GM12878 (cell line): ENCODE measurements at regions of chr15 and their contacts with region 1.

Region 1: DNA sequence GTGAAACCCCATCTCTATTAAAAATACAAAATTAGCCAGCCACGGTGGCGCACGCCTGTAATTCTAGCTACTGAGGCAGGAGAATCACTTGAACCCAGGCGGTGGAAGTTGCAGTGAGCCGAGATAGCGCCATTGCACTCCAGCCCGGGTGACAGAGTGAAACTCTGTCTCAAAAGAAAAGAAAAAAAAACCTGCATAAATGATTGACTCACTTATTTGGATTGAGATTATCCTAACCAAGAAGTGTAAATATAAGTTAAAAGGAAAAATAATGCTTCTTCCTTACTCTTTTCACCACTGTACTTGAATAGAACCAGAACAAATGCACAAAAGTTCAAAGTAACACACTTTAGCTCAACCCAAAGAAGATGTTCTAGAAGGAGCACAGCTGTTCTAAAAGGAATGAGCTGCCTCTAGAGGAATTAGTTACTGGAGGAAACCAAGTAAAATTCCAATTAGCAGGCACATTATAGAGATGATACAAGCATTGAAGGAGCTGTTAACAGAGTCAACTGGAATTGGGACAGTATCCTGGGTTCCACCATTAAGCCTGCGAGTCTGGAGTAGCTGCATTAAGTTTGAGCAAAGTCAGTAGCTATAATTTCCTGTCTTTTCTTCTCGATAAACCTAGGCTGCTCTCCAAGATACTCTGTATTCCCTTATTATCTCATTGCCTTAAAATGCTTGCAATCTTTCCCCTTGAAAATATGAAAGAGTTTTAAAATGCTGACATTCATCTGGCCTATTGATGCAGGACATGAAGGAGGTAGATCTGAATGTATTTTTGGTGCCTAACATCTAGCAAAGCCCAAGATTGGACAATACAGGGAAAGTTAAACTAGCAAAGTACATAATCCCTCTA is 9.5 kb downstream of the MTHFS start:
- DNase-seq: no peak
- ATAC-seq: no peak
- H3K4me3 ChIP-seq: no peak overlapping the region
- H3K27ac ChIP-seq: no peak overlapping the region
- H3K4me1 ChIP-seq: peaks cover 5% of the 10 kb centered on the region
- H3K27me3 ChIP-seq: no peaks in the 10 kb centered on the region
- CTCF ChIP-seq: no peak
- EP300 ChIP-seq: no peak
- POLR2A ChIP-seq: no peak
- RAD21 ChIP-seq: no peak

Region 2: DNA sequence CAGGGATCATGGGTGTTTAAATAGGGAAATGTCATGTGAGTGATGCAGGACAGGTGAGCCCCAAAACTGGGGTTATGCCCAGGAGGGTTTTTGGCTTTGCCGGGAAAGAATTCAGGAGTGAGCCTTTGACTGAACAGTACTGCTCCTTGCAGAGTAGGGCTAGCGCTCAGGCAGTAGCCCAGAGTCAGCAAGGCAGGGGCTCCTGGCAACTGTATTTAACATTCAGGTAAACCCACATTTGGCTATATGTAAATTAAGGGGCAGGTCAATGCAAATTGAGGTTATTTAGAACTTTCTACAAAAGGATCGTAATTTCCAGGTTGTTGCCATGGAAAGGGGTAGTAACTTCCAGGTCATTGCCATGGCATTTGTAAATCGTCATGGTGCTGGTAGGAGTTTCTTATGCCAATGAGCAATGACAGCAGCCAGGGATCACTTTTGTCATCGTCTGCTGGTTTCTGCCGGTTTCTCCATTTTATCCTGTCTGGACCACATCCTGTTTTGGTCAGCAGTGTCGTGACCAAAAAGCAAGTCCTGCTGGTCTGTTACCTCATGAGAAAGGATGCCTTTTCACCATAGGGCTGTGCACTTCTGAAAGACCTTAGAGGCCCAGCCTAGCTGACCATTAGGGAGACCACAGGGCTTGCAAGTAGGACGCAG is 14.8 kb before region 1 on chr15:
- CTCF ChIA-PET with region 1: interaction called, 5 read pairs
- POLR2A ChIA-PET with region 1: interaction called, 4 read pairs
- RAD21 ChIA-PET with region 1: interaction called, 3 read pairs
- SMC1A ChIA-PET with region 1: interaction called, 11 read pairs
- in situ Hi-C with region 1: no loop called
- intact Hi-C with region 1: no loop called
- DNase-seq: no peak
- ATAC-seq: peak; percentile 54
- H3K4me3 ChIP-seq: no peak overlapping the region
- H3K27ac ChIP-seq: no peak overlapping the region
- H3K4me1 ChIP-seq: no peaks in the 10 kb centered on the region
- H3K27me3 ChIP-seq: no peaks in the 10 kb centered on the region
- CTCF ChIP-seq: no peak
- EP300 ChIP-seq: no peak
- POLR2A ChIP-seq: no peak
- RAD21 ChIP-seq: no peak